ENCODE measurements at regions of chr1 and their contacts with region 1.

Region 1: DNA sequence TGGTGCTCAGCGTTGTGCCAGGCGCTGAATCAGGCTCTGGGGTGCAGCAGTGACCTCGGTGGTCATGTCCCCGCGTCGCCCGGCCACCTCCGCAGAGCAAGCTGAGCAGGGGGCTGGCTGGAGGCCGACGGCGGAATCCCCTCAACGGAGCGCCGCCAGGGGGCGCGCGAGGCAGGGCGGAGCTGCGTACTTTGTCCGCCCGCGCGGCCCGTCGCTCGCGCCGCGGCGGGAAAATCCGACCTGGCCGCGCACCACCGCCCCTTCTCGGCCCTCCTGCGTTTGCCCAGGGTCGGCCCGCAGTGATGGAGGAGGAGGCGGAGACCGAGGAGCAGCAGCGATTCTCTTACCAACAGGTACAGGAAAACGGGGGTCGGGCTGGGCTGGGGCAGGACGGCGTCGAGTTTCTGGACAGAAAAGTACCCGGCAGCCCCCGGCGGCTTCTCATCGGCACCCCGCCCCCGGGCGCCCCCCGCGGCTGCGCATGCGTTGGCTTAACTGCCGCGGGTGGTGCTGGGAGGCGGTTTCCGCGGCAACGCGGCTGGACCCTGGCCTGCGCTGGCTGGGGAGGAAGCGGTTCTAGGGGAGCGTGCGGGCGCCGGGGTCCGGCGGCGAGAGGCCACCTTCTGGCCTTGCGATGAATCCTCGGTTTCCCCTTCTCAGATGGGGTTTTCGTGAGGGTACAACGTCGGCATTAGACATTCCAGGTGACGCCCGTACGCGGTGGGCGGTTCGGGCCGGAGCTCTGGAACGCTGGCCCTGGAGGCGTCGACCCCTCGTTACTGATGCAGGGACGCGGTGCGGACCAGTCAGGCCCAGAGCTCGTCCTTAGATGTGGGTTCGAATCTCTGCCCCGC is at the start of gene CENPS:
- DNase-seq: peak; percentile 87
- H3K4me3 Mint-ChIP-seq: peak within 1 kb of the TSS; percentile 89
- H3K27ac Mint-ChIP-seq: peak within 1 kb of the TSS; percentile 87
- H3K4me1 Mint-ChIP-seq: peaks cover 20% of the 10 kb centered on the region
- H3K27me3 Mint-ChIP-seq: no peaks in the 10 kb centered on the region
- total RNA-seq, gene CENPS: 20.0 to 22.7 TPM

Region 2: DNA sequence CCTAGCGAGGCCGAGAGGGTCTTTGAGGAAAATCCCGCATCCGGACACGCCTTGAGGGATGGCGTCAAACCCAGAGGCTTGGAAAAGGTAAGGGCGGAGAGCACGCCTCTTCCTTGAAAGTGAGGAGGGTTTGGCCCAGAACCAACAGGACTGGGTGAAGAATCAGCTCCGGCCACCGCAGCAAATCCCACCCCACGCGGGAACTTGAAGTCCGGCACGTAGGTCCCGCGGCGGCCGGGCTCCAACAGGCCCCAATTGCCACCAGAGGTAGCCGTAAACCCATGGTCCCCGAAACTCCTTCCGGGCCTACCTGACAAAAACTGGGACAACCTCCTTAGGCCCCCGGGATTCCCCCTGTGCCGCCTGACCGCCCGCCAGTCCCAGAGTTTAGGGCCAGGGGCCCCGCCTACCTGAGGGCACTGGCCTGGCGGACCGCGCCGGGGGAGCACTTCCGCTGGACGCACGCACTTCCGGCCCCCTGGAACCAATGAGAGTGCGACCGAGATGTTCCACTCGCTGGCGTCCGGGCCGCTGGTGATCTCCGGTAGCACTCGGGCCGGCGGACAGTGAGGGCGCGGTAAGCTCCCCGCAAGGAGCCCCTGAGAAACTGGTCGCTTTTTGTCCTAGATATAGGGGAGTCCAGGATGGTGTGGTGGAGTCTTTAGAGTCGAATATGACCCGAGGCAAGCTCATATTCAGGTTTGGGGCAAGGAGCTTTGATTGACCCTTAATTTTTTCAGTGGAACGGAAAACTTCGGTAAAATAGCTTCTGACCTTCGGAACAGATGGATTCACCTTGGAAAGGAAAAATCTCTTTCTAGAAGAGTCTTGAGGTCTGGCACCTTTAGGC is 487.3 kb before region 1 on chr1 and contains the starts of genes LZIC and NMNAT1:
- CTCF ChIA-PET with region 1: interaction called, 6 read pairs
- POLR2A ChIA-PET with region 1: no interaction called
- intact Hi-C with region 1: loop called (anchors 2 kb)
- DNase-seq: peak; percentile 96
- H3K4me3 Mint-ChIP-seq: peak within 1 kb of the TSS; percentile 99
- H3K27ac Mint-ChIP-seq: peak within 1 kb of the TSS; percentile 91
- H3K4me1 Mint-ChIP-seq: peaks cover 20% of the 10 kb centered on the region
- H3K27me3 Mint-ChIP-seq: no peaks in the 10 kb centered on the region
- total RNA-seq, gene LZIC: 22.0 to 22.8 TPM
- total RNA-seq, gene NMNAT1: 7.8 to 9.9 TPM

Region 3: GRCh38 chr1:10209905-10210810 is 220.3 kb before region 1 on chr1 and contains the start of gene KIF1B:
- CTCF ChIA-PET with region 1: interaction called, 13 read pairs
- POLR2A ChIA-PET with region 1: interaction called, 6 read pairs
- intact Hi-C with region 1: loop called (anchors 1 kb)
- DNase-seq: peak; percentile 97
- H3K4me3 Mint-ChIP-seq: peak within 1 kb of the TSS; percentile 82
- H3K27ac Mint-ChIP-seq: peak within 1 kb of the TSS; percentile 60
- H3K4me1 Mint-ChIP-seq: peaks cover 33% of the 10 kb centered on the region
- H3K27me3 Mint-ChIP-seq: no peaks in the 10 kb centered on the region
- total RNA-seq, gene KIF1B: 16.8 to 17.4 TPM

Region 4: DNA sequence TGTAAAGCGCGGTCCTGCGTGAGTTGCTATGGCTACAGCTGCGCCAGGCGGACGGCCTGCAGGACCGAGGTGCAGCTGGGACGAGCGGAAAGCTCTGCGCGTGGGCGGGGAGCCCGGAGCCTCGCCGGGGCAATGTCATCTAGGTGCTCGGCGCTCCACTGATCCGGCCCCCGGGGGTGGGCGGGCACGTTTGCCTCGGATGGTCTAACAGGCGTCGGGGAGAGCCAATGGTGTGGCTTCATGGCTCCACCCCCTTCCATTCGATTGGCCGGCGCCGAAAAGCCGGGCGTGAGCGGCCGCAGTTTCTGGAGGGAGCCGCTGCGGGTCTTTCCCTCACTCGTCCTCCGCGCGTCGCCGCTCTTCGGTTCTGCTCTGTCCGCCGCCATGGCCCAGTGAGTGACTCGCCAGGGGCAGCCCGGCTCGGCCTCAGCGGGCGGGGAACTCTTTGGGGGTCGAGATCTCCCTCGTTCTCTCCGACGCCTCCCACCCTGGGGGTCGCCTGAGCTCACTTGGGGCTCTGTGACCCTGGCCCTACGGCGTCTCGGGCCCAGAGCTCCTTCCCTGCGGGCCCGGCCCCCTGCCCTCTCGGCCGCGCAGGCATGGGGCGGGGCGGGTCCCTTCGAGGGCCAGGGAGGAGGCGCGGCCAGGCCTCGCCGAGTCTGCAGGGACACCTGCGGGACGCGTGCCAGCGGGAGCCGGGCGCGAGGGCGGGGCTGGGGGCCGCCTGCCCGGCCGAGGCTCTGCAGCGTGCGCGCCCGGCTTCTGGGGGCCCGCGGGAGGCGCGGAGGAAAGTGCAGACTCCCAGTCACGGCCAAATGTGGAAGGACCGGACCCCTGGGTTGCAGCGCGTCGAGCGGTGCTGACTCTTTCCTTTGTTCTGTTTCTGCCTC is 31.5 kb before region 1 on chr1 and contains the start of gene PGD:
- CTCF ChIA-PET with region 1: interaction called, 3 read pairs
- POLR2A ChIA-PET with region 1: interaction called, 3 read pairs
- intact Hi-C with region 1: loop called (anchors 1 kb)
- DNase-seq: peak; percentile 99
- H3K4me3 Mint-ChIP-seq: peak within 1 kb of the TSS; percentile 88
- H3K27ac Mint-ChIP-seq: peak within 1 kb of the TSS; percentile 55
- H3K4me1 Mint-ChIP-seq: peaks cover 25% of the 10 kb centered on the region
- H3K27me3 Mint-ChIP-seq: no peaks in the 10 kb centered on the region
- total RNA-seq, gene PGD: 94.6 to 96.7 TPM

Region 5: DNA sequence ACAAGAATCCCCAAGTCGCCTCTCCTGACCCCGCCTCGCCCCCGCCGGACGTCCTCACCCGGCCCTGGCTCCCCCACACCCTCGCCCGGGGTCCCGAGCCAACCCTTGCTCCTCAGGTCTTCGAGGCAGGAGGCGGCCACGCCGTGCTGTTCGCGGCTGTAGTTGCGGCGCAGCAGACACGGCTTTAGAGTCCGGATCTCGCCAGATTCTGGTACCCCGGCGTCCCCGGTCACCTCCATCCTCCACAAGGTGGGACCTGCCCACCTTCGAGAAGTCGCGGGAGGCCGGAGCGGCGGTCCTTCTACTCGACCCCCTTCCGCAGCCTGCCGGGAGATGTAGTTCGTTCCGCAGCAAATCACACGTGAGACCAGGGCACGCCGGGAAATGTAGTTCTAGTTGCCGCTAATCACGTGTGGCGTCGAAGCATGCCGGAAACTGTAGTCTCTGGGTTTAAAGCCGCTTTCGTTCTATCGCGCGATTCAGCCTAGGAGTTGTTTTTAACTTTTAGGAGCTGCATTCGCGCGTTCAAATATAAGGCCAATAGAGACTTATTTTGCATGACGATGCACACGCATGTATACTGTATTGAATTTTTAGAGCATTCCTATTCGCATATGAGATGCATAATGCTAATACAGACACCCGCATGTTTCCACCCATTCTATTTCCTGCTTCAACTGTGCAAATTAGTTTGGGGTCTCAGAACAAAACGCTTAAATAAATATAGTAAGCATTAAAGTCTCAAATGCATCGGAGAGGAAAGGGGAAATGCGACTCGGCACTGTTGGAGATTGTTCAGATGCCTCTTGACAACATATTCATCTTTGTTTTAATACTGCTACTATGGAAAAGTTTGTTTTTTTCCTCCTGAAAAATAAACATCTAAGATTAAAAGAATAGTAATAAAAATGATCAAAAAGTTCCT is 42.0 kb after region 1 on chr1 and contains the start of gene DFFA:
- CTCF ChIA-PET with region 1: no interaction called
- POLR2A ChIA-PET with region 1: interaction called, 3 read pairs
- intact Hi-C with region 1: loop called (anchors 1 kb)
- DNase-seq: peak; percentile 96
- H3K4me3 Mint-ChIP-seq: peak within 1 kb of the TSS; percentile 92
- H3K27ac Mint-ChIP-seq: peak within 1 kb of the TSS; percentile 82
- H3K4me1 Mint-ChIP-seq: peaks cover 31% of the 10 kb centered on the region
- H3K27me3 Mint-ChIP-seq: no peaks in the 10 kb centered on the region
- total RNA-seq, gene DFFA: 32.0 to 32.8 TPM

Measured in activated CD4-positive, alpha-beta memory T cell treated with anti-CD3 and anti-CD28 coated beads for 36 hours (primary cell).